H1 (cell line): ENCODE measurements at regions of chr1 and their contacts with region 1.

Region 1: DNA sequence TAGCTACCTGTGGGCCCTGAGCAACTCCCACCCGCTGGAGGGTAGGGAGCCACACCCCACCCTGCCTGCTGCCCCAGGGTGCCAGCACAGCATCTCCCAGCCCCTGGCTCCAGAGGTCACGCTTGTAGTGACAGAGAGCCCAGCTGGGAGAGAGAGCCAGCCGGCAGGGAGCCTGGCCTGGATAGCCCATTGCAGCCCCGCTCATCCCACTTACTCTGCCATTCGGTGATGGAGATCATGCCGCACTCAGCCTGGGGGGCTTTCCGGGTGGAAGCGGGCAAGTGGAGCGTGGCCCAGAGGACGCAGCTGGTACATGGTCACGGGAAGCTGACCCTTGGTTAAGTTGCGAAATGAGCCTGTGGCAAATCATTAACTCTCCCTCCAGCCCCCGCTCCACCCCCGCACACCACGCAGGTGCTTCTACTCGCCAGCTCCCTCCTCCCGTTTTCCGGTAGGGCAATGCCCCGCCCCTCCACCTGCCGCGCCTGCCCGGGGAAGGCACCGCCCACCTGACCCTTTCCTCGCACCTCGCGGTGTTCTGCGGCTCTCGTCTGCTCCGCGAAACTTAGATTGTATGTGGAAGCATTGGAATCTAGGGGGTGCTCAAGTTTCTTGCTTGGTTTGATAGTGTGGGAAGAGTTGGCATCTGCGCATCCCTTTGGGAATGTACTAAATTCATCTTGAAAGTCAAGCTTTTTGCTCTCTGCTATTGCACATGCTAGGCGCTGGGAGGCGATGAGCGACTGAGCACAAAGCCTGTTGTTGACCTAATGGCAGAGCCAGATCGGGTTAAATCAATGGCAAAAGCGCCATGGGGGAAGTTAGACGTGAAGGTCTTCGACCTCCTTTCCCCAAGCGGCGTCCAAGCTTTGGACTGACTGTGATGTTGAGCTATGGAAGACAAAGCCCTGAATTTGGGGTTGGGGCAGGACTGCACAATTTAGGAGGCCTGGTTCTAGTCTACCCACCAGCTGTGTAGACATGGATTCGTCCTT is at the start of gene GOLT1A:
- DNase-seq: peak; percentile 66 to 98
- H3K4me3 ChIP-seq: peak within 1 kb of the TSS; percentile 47 to 69 (median 61)
- H3K27ac ChIP-seq: 0 out of 2 replicates have a peak within 1 kb of the TSS, but pooled peaks have one; percentile 11
- H3K4me1 ChIP-seq: peaks cover 0 to 3% (median 2%) of the 10 kb centered on the region in 4 experiments; a peak in 4 of 7 replicates
- H3K27me3 ChIP-seq: no peaks in the 10 kb centered on the region
- CTCF ChIP-seq: peak; percentile 57 to 87 (median 84)
- EP300 ChIP-seq: no peak
- POLR2A ChIP-seq: peak in 1 of 2 experiments; percentile 14; a peak in 1 of 3 replicates
- RAD21 ChIP-seq: peak; percentile 85 to 89
- total RNA-seq, gene GOLT1A: 6.9 and 7.5 TPM in 2 replicates

Region 2: GRCh38 chr1:204162231-204163074 is 51.5 kb before region 1 on chr1:
- CTCF ChIA-PET with region 1: interaction called, 54 read pairs
- POLR2A ChIA-PET with region 1: no interaction called
- DNase-seq: peak; percentile 63 to 100
- H3K4me3 ChIP-seq: no peak overlapping the region
- H3K27ac ChIP-seq: no peak overlapping the region
- H3K4me1 ChIP-seq: no peaks in the 10 kb centered on the region; a peak in 1 of 7 replicates
- H3K27me3 ChIP-seq: no peaks in the 10 kb centered on the region
- CTCF ChIP-seq: peak; percentile 99
- EP300 ChIP-seq: no peak
- POLR2A ChIP-seq: no peak
- RAD21 ChIP-seq: peak; percentile 100

Region 3: GRCh38 chr1:204225841-204226735 is 12.1 kb after region 1 on chr1:
- CTCF ChIA-PET with region 1: interaction called, 23 read pairs
- POLR2A ChIA-PET with region 1: interaction called, 4 read pairs
- DNase-seq: no peak
- H3K4me3 ChIP-seq: no peak overlapping the region
- H3K27ac ChIP-seq: no peak overlapping the region
- H3K4me1 ChIP-seq: 0 out of 7 replicates have a peak, but pooled peaks cover 0 to 2% (median 0%) of the 10 kb centered on the region in 4 experiments
- H3K27me3 ChIP-seq: no peaks in the 10 kb centered on the region
- CTCF ChIP-seq: no peak
- EP300 ChIP-seq: no peak
- POLR2A ChIP-seq: no peak
- RAD21 ChIP-seq: no peak

Region 4: DNA sequence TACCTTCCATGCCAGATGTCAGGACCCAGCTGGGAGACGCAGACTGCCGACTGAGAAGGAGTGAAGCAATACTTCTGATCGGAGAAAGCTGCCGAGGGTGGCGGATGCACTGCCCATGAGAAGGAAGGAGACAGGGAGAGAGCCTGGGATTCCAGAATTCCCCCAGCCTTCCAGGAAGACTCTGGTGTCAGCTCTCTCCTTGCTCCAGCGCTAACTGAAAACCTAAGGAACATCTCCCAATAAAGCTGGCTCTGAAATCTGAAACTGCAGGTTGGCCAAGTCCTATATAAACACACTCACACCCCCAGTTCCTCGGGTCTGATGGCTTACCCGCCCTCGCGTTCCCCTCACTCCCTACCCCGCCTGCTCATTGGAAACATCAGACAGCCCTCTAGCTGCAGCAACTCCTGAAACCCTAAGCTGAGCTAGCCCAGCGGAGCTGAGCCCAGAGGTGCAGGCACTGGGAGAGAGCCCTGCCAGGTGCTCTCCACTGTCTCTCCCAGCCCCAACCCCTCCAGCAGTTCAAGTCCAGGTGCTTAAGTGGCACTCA is 93.4 kb after region 1 on chr1:
- CTCF ChIA-PET with region 1: interaction called, 11 read pairs
- POLR2A ChIA-PET with region 1: interaction called, 3 read pairs
- DNase-seq: peak in 1 of 2 experiments; percentile 81
- H3K4me3 ChIP-seq: peak overlapping the region; percentile 19 to 48 (median 38); a peak in 6 of 8 replicates
- H3K27ac ChIP-seq: no peak overlapping the region
- H3K4me1 ChIP-seq: peaks cover 10 to 40% (median 20%) of the 10 kb centered on the region in 4 experiments
- H3K27me3 ChIP-seq: no peaks in the 10 kb centered on the region; a peak in 1 of 7 replicates
- CTCF ChIP-seq: peak in 1 of 3 experiments; percentile 19; a peak in 2 of 4 replicates
- EP300 ChIP-seq: no peak
- POLR2A ChIP-seq: no peak
- RAD21 ChIP-seq: peak; percentile 13 to 50; a peak in 2 of 4 replicates

Region 5: GRCh38 chr1:204368996-204369726 is 155.2 kb after region 1 on chr1:
- CTCF ChIA-PET with region 1: interaction called, 156 read pairs
- POLR2A ChIA-PET with region 1: no interaction called
- DNase-seq: no peak
- H3K4me3 ChIP-seq: no peak overlapping the region
- H3K27ac ChIP-seq: no peak overlapping the region
- H3K4me1 ChIP-seq: no peaks in the 10 kb centered on the region
- H3K27me3 ChIP-seq: peaks cover 0 to 4% (median 0%) of the 10 kb centered on the region in 4 experiments; a peak in 1 of 7 replicates
- CTCF ChIP-seq: no peak
- EP300 ChIP-seq: no peak
- POLR2A ChIP-seq: no peak
- RAD21 ChIP-seq: no peak

Region 6: DNA sequence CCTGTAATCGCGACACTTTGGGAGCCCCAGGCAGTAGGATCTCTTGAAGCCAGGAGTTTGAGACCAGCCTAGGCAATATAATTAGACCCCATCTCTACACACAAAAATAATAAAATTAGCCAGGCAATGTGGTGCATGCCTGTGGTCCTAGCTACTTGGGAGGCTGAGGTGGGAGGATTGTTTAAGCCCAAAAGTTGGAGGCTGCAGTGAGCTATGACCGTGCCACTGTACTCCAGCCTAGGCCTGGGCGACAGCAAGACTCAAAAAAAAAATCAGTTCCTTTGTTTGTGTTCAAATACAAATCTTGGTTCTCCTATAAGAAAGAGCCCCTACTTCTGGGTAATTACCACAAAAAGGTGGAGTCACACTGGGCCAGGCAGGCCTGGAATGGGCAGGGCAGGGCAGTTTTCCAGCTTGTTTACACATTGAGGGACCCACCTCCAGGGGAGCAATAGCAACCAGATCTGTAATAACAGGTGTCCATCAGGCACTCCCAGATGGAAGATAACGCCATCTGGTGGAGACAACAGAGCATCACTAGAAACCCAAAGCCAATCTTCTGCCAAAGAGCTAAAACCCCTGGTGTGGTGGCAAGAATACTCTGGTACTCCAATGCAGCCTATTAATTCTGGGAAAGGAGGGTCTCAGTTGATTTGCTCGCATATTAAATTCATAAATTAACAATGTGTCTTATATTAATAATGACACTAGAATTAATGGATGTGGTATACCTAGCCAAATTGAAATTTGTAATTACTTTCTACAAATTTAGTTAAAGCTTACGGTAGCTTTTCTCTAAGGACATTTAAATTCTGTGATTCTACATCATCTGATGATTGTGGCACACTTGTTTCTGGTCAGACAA is 184.5 kb after region 1 on chr1:
- CTCF ChIA-PET with region 1: interaction called, 19 read pairs
- POLR2A ChIA-PET with region 1: no interaction called
- DNase-seq: peak; percentile 74 to 82
- H3K4me3 ChIP-seq: no peak overlapping the region
- H3K27ac ChIP-seq: no peak overlapping the region; the same call in 1 of the 2 replicates
- H3K4me1 ChIP-seq: no peaks in the 10 kb centered on the region
- H3K27me3 ChIP-seq: no peaks in the 10 kb centered on the region
- CTCF ChIP-seq: peak; percentile 26 to 98 (median 96)
- EP300 ChIP-seq: peak in 1 of 2 experiments; percentile 57; a peak in 1 of 3 replicates
- POLR2A ChIP-seq: no peak
- RAD21 ChIP-seq: peak; percentile 67 to 84